Posterior vena cava (tissue), 2 donors: ENCODE measurements at regions of chr11 and their contacts with region 1.

Region 1: DNA sequence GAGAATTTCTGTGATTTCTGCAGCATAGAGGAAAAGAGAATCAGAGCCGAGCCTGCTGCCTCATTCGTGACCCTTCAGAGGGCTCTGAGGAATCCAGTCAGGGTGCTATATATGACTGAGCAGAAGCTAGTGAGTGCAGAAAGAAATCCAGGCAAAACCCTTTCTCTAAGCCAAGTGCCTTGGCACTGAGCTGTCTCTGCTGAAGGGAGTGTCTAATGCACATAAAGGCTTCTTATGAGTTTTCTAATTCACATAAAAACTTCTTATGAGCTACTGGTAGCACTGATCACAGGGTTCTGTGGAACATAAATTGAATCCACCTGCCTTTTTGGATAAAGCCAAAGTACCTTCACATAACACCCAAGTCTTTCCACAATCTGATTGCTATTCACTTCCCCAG is 785.7 kb upstream of the CCDC90B start:
- DNase-seq: no peak

Region 2: GRCh38 chr11:83836883-83837654 is 234.8 kb before region 1 on chr11:
- intact Hi-C with region 1: loop called in 1 of 2 experiments (anchors 5 kb)
- DNase-seq: no peak

Region 3: GRCh38 chr11:83921447-83922192 is 150.2 kb before region 1 on chr11:
- intact Hi-C with region 1: no loop called
- DNase-seq: no peak